K562 (cell line): ENCODE measurements at regions of chr3 and their contacts with region 1.

Region 1: GRCh38 chr3:176328198-176328597 is 869.1 kb downstream of the TBL1XR1 start:
- DNase-seq: no peak
- ATAC-seq: no peak
- H3K4me3 ChIP-seq: no peak overlapping the region
- H3K27ac ChIP-seq: no peak overlapping the region
- H3K4me1 ChIP-seq: no peaks in the 10 kb centered on the region
- H3K27me3 ChIP-seq: no peaks in the 10 kb centered on the region
- CTCF ChIP-seq: no peak
- EP300 ChIP-seq: no peak
- POLR2A ChIP-seq: no peak
- RAD21 ChIP-seq: no peak

Region 2: GRCh38 chr3:176375519-176375918 is 47.3 kb after region 1 on chr3:
- CTCF ChIA-PET with region 1: no interaction called
- POLR2A ChIA-PET with region 1: no interaction called
- in situ Hi-C with region 1: loop called (anchors 10 kb)
- intact Hi-C with region 1: no loop called
- DNase-seq: no peak
- ATAC-seq: no peak
- H3K4me3 ChIP-seq: no peak overlapping the region
- H3K27ac ChIP-seq: no peak overlapping the region
- H3K4me1 ChIP-seq: no peaks in the 10 kb centered on the region
- H3K27me3 ChIP-seq: no peaks in the 10 kb centered on the region
- CTCF ChIP-seq: no peak
- EP300 ChIP-seq: no peak
- POLR2A ChIP-seq: no peak
- RAD21 ChIP-seq: no peak

Region 3: DNA sequence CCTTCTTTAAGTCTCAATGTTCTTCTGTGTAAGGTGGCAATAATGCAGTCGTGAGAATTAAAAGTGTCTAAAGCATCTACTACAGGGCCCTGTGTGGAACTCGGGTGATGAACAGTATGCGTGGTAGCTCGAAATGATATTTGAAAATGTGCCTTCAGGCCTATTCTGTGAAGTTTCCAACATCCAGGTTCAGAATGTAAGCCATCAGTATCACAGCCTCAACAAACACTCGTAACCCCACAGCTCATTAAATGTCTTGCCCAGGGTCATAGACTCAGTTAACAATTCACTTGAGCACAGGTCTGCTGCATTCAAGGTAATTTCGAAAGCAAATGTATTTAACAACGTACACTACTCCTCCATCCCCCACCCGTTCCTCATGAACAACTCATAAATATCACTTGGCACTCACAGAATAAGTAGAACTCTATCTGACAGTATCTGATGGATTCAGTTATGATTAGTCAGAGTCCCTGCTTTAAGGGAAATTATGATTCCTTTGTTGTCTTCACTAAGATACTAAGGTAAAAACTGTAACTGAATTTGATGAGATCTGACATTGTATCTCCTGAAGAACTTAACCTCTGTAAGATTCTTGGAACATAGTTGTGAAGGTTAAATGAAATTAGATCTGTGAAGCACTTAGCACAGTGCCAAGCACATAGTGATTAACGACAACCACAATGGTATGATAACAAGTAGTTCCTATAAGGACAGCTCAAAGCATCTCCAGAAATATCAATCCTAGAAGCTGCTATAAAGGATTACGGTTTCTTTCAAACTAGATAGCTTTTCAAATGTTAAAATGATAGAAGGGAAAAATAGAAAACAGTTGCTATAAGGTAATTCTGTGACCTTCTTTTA is 226.8 kb after region 1 on chr3:
- CTCF ChIA-PET with region 1: no interaction called
- POLR2A ChIA-PET with region 1: no interaction called
- in situ Hi-C with region 1: no loop called
- intact Hi-C with region 1: no loop called
- DNase-seq: no peak
- ATAC-seq: no peak
- H3K4me3 ChIP-seq: no peak overlapping the region
- H3K27ac ChIP-seq: no peak overlapping the region
- H3K4me1 ChIP-seq: no peaks in the 10 kb centered on the region
- H3K27me3 ChIP-seq: no peaks in the 10 kb centered on the region; a peak in 1 of 5 replicates
- CTCF ChIP-seq: no peak
- EP300 ChIP-seq: no peak
- POLR2A ChIP-seq: no peak
- RAD21 ChIP-seq: no peak

Region 4: DNA sequence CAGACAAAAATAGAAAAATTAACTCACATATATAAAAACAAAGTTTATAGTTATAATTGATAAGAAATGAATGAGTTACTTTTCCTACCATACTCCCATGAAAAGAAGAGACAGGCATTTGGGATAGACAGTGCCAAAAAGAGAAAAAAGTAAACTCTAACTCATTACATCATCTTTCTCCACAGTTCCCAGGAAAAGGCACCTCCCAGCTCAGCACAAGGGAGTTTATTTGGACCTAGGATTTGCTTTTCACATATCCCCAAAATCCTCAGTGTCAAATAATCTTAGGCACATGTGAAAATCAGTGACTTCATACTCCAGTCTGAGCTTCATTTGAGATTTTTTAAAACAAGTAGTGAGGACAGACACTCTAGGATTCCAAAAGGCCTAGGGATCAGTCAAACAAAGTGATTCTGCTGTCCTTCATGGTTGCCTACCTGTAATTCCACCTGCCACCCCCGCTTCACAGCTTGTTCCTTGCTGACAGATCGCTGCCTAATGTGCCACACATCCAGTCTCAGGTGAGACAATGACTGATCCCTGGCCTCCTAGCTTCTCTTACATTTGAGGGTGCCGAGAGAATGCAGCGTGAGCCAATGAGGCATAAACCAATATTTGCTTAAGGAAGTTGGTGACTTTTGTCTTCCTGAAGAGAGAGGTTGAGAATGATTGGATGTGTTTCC is 295.4 kb after region 1 on chr3:
- CTCF ChIA-PET with region 1: no interaction called
- POLR2A ChIA-PET with region 1: no interaction called
- in situ Hi-C with region 1: no loop called
- intact Hi-C with region 1: no loop called
- DNase-seq: no peak
- ATAC-seq: no peak
- H3K4me3 ChIP-seq: no peak overlapping the region
- H3K27ac ChIP-seq: no peak overlapping the region
- H3K4me1 ChIP-seq: no peaks in the 10 kb centered on the region
- H3K27me3 ChIP-seq: no peaks in the 10 kb centered on the region; a peak in 1 of 5 replicates
- CTCF ChIP-seq: no peak
- EP300 ChIP-seq: no peak
- POLR2A ChIP-seq: no peak
- RAD21 ChIP-seq: no peak